Mammary epithelial cell (primary cell): ENCODE measurements at regions of chr2 and their contacts with region 1.

Region 1: DNA sequence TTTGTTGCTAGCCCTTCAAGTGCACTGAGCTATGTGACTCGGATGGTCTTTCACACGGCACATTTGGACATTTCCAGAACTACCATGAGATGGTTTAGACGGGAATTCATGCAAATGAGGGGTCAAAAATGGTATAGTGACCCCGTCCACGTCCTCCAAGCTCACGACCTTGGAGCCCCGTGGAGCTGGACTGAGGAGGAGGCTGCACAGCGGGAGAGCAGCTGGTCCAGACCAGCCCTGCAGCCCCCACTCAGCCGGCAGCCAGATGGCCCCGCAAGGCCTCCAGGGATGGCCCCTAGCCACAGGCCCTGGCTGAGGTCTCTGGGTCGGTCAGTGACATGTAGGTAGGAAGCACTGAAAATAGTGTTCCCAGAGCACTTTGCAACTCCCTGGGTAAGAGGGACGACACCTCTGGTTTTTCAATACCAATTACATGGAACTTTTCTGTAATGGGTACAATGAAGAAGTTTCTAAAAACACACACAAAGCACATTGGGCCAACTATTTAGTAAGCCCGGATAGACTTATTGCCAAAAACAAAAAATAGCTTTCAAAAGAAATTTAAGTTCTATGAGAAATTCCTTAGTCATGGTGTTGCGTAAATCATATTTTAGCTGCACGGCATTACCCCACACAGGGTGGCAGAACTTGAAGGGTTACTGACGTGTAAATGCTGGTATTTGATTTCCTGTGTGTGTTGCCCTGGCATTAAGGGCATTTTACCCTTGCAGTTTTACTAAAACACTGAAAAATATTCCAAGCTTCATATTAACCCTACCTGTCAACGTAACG is 88.8 kb downstream of the EPAS1 start:
- DNase-seq: peak; percentile 79
- H3K4me3 ChIP-seq: no peak overlapping the region
- H3K27ac ChIP-seq: peak overlapping the region; percentile 30
- H3K4me1 ChIP-seq: peaks cover 34% of the 10 kb centered on the region
- H3K27me3 ChIP-seq: no peaks in the 10 kb centered on the region
- CTCF ChIP-seq: peak in 1 of 2 donors; percentile 16

Region 2: GRCh38 chr2:46002507-46002883 is 383.5 kb before region 1 on chr2:
- CTCF ChIA-PET with region 1: no interaction called
- dilution Hi-C with region 1: loop called (anchors 10 kb)
- in situ Hi-C with region 1: no loop called
- intact Hi-C with region 1: no loop called
- DNase-seq: peak; percentile 11
- H3K4me3 ChIP-seq: no peak overlapping the region
- H3K27ac ChIP-seq: no peak overlapping the region
- H3K4me1 ChIP-seq: peaks cover 3% of the 10 kb centered on the region
- H3K27me3 ChIP-seq: no peaks in the 10 kb centered on the region
- CTCF ChIP-seq: no peak

Region 3: GRCh38 chr2:46481198-46482193 is 95.5 kb after region 1 on chr2:
- CTCF ChIA-PET with region 1: no interaction called
- dilution Hi-C with region 1: no loop called
- in situ Hi-C with region 1: no loop called
- intact Hi-C with region 1: no loop called
- DNase-seq: peak; percentile 66
- H3K4me3 ChIP-seq: no peak overlapping the region
- H3K27ac ChIP-seq: no peak overlapping the region
- H3K4me1 ChIP-seq: peaks cover 4% of the 10 kb centered on the region
- H3K27me3 ChIP-seq: no peaks in the 10 kb centered on the region
- CTCF ChIP-seq: no peak

Region 4: GRCh38 chr2:46601328-46601963 is 215.5 kb after region 1 on chr2:
- CTCF ChIA-PET with region 1: no interaction called
- dilution Hi-C with region 1: loop called (anchors 10 kb)
- in situ Hi-C with region 1: no loop called
- intact Hi-C with region 1: no loop called
- DNase-seq: no peak
- H3K4me3 ChIP-seq: no peak overlapping the region
- H3K27ac ChIP-seq: no peak overlapping the region
- H3K4me1 ChIP-seq: no peaks in the 10 kb centered on the region
- H3K27me3 ChIP-seq: no peaks in the 10 kb centered on the region
- CTCF ChIP-seq: peak; percentile 34 to 48